ENCODE measurements at regions of chr5 and their contacts with region 1.

Region 1: GRCh38 chr5:178732281-178732680 is 1.8 kb upstream of the ZNF354A start:
- DNase-seq: no peak
- H3K4me3 ChIP-seq: no peak overlapping the region
- H3K4me3 Mint-ChIP-seq: no peak overlapping the region
- H3K27ac Mint-ChIP-seq: no peak overlapping the region
- H3K4me1 ChIP-seq: peaks cover 3% of the 10 kb centered on the region; the same call in 1 of the 2 replicates
- H3K4me1 Mint-ChIP-seq: peaks cover 6% of the 10 kb centered on the region
- H3K27me3 ChIP-seq: no peaks in the 10 kb centered on the region
- H3K27me3 Mint-ChIP-seq: no peaks in the 10 kb centered on the region
- CTCF ChIP-seq: no peak

Region 2: GRCh38 chr5:178786859-178787760 is 54.8 kb after region 1 on chr5:
- CTCF ChIA-PET with region 1: no interaction called
- POLR2A ChIA-PET with region 1: no interaction called
- intact Hi-C with region 1: loop called (anchors 1 kb)
- DNase-seq: peak; percentile 53 to 74
- H3K4me3 ChIP-seq: no peak overlapping the region
- H3K4me3 Mint-ChIP-seq: no peak overlapping the region
- H3K27ac Mint-ChIP-seq: peak overlapping the region; percentile 21
- H3K4me1 ChIP-seq: peaks cover 19% of the 10 kb centered on the region
- H3K4me1 Mint-ChIP-seq: no peaks in the 10 kb centered on the region
- H3K27me3 ChIP-seq: no peaks in the 10 kb centered on the region
- H3K27me3 Mint-ChIP-seq: no peaks in the 10 kb centered on the region
- CTCF ChIP-seq: no peak

Region 3: DNA sequence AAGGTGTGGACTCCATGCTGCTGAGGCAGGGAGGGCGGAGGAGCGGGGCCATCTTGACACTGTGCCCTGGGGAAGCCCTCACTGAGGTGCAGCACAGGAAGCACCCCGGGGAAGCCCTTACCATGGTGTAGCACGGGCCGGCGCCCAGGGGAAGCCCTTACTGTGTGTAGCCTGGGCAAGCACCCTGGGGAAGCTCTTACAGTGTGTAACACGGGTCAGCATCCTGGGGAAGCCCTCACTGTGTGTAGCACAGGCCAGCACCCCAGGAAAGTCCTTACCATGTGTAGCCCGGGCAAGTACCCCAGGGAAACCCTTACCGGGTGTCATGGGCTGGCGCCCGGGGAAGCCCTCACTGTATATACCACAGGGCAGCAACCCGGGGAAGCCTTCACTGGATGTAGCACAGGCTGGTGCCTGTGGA is 64.8 kb after region 1 on chr5:
- CTCF ChIA-PET with region 1: no interaction called
- POLR2A ChIA-PET with region 1: no interaction called
- intact Hi-C with region 1: no loop called
- DNase-seq: no peak
- H3K4me3 ChIP-seq: no peak overlapping the region
- H3K4me3 Mint-ChIP-seq: no peak overlapping the region
- H3K27ac Mint-ChIP-seq: no peak overlapping the region
- H3K4me1 ChIP-seq: no peaks in the 10 kb centered on the region
- H3K4me1 Mint-ChIP-seq: no peaks in the 10 kb centered on the region
- H3K27me3 ChIP-seq: no peaks in the 10 kb centered on the region
- H3K27me3 Mint-ChIP-seq: no peaks in the 10 kb centered on the region
- CTCF ChIP-seq: no peak

Region 4: GRCh38 chr5:178818094-178818493 is 85.8 kb after region 1 on chr5:
- CTCF ChIA-PET with region 1: interaction called, 11 read pairs
- POLR2A ChIA-PET with region 1: no interaction called
- intact Hi-C with region 1: loop called (anchors 2 kb)
- DNase-seq: peak in 1 of 2 experiments; percentile 31
- H3K4me3 ChIP-seq: no peak overlapping the region
- H3K4me3 Mint-ChIP-seq: no peak overlapping the region
- H3K27ac Mint-ChIP-seq: no peak overlapping the region
- H3K4me1 ChIP-seq: no peaks in the 10 kb centered on the region
- H3K4me1 Mint-ChIP-seq: no peaks in the 10 kb centered on the region
- H3K27me3 ChIP-seq: no peaks in the 10 kb centered on the region
- H3K27me3 Mint-ChIP-seq: no peaks in the 10 kb centered on the region
- CTCF ChIP-seq: no peak

Region 5: GRCh38 chr5:178838695-178839685 is 106.7 kb after region 1 on chr5:
- CTCF ChIA-PET with region 1: no interaction called
- POLR2A ChIA-PET with region 1: no interaction called
- intact Hi-C with region 1: loop called (anchors 2 kb)
- DNase-seq: peak; percentile 56 to 66
- H3K4me3 ChIP-seq: no peak overlapping the region
- H3K4me3 Mint-ChIP-seq: no peak overlapping the region
- H3K27ac Mint-ChIP-seq: no peak overlapping the region
- H3K4me1 ChIP-seq: no peaks in the 10 kb centered on the region
- H3K4me1 Mint-ChIP-seq: no peaks in the 10 kb centered on the region
- H3K27me3 ChIP-seq: no peaks in the 10 kb centered on the region
- H3K27me3 Mint-ChIP-seq: no peaks in the 10 kb centered on the region
- CTCF ChIP-seq: peak; percentile 54 to 55

Region 6: GRCh38 chr5:178859625-178860531 is 127.6 kb after region 1 on chr5 and contains the start of gene ZNF354B:
- CTCF ChIA-PET with region 1: interaction called, 26 read pairs
- POLR2A ChIA-PET with region 1: interaction called, 12 read pairs
- intact Hi-C with region 1: loop called (anchors 1 kb)
- DNase-seq: peak; percentile 93 to 95
- H3K4me3 ChIP-seq: peak within 1 kb of the TSS; percentile 48
- H3K4me3 Mint-ChIP-seq: peak within 1 kb of the TSS; percentile 93
- H3K27ac Mint-ChIP-seq: peak within 1 kb of the TSS; percentile 92
- H3K4me1 ChIP-seq: no peaks in the 10 kb centered on the region
- H3K4me1 Mint-ChIP-seq: peaks cover 15% of the 10 kb centered on the region
- H3K27me3 ChIP-seq: no peaks in the 10 kb centered on the region
- H3K27me3 Mint-ChIP-seq: no peaks in the 10 kb centered on the region
- CTCF ChIP-seq: no peak
- total RNA-seq, gene ZNF354B: 21.0 and 22.3 TPM in 2 replicates

Region 7: DNA sequence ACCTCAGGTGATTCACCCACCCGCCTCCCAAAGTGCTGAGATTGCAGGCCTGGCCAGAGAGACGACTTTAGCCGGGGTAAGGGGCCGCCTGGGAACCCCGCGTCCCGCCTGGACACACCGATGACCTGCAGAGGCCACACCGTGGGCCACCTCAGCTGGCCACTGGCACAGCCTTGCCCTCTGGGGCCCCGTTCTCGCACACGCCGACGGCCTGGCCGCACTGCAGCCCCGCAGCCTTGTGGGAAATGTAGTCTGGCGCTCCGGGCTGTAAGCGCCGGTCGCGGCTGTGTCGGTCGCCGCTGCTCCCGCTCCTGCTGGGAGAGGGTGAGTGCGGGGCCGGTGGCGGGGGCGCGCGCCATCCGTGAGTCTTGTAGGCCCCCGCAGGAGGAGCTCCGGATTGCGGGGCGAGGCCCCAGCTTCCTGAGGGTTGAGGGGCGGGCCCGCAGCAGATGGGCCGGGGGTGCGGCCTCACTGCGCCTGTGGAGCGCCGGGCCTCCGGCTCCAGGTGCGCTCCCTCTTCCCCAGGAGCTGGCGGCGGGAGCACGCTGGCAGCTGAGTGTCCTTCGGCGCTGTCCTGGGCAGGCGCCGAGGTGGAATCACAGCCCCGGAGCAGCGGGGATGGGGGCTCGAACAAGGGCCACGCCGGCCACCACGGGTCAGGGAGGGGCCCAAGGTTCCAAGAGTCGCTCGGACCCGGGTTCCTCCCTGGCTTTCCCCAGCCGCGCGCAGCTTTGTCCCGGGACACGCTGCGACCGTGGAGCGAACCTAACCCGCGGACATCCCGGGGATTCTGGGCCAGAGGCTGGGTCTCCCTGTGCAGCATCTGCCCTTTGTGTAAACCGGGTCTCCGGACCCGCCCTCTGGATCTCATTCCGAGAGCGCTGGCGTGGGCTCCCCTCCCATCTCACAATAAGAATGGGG is 163.6 kb after region 1 on chr5 and contains the start of gene ZFP2:
- CTCF ChIA-PET with region 1: interaction called, 5 read pairs
- POLR2A ChIA-PET with region 1: no interaction called
- intact Hi-C with region 1: loop called (anchors 1 kb)
- DNase-seq: peak; percentile 71 to 74
- H3K4me3 ChIP-seq: peak within 1 kb of the TSS; percentile 94
- H3K4me3 Mint-ChIP-seq: peak within 1 kb of the TSS; percentile 80
- H3K27ac Mint-ChIP-seq: no peak within 1 kb of the TSS
- H3K4me1 ChIP-seq: no peaks in the 10 kb centered on the region
- H3K4me1 Mint-ChIP-seq: no peaks in the 10 kb centered on the region
- H3K27me3 ChIP-seq: no peaks in the 10 kb centered on the region
- H3K27me3 Mint-ChIP-seq: no peaks in the 10 kb centered on the region
- CTCF ChIP-seq: no peak
- total RNA-seq, gene ZFP2: 0.29 and 0.35 TPM in 2 replicates

Measured in Caco-2 (cell line).